Endothelial cell of umbilical vein (primary cell): ENCODE measurements at regions of chr12 and their contacts with region 1.

Region 1: DNA sequence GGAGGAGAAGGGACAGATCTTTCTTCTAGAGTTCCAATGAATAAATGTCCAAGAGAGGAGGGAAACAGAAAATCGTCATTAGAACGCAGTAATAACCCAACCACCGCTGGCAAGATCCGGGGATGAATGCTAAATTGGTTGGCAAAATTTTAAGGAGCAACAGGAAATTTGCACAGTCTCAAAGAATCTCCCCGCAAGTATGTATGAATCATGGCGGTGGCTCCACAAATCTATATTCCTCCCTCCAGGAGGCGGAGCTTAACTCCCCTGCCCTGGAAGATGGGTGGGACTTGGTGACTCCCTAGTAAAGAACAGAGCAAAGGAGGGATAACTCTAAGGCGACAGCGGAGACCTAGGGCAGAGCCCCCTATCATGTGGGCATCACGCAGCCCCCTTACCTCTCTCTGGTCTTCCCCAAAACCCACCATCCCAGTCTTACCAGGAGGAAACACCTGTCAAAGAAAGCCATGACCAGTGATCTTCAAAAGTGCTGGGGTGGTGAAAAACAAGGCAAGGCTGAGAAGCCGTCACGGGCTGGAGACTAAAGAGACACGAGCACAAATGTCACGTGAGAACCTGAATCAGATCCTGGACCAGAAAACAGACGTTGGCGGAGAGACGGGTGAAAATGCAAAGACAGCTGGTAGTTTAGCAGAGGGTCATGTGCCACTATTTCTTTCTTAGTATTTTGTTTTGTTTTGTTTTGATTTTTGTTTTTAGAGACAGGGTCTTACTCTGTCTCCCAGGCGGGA is 125.8 kb downstream of the NCOR2 start:
- DNase-seq: peak; percentile 83
- H3K4me3 ChIP-seq: peak overlapping the region in 1 of 3 experiments; percentile 5
- H3K27ac ChIP-seq: peak overlapping the region; percentile 89
- H3K4me1 ChIP-seq: peaks cover 27% of the 10 kb centered on the region
- H3K27me3 ChIP-seq: no peaks in the 10 kb centered on the region
- CTCF ChIP-seq: no peak
- POLR2A ChIP-seq: peak; percentile 56

Region 2: DNA sequence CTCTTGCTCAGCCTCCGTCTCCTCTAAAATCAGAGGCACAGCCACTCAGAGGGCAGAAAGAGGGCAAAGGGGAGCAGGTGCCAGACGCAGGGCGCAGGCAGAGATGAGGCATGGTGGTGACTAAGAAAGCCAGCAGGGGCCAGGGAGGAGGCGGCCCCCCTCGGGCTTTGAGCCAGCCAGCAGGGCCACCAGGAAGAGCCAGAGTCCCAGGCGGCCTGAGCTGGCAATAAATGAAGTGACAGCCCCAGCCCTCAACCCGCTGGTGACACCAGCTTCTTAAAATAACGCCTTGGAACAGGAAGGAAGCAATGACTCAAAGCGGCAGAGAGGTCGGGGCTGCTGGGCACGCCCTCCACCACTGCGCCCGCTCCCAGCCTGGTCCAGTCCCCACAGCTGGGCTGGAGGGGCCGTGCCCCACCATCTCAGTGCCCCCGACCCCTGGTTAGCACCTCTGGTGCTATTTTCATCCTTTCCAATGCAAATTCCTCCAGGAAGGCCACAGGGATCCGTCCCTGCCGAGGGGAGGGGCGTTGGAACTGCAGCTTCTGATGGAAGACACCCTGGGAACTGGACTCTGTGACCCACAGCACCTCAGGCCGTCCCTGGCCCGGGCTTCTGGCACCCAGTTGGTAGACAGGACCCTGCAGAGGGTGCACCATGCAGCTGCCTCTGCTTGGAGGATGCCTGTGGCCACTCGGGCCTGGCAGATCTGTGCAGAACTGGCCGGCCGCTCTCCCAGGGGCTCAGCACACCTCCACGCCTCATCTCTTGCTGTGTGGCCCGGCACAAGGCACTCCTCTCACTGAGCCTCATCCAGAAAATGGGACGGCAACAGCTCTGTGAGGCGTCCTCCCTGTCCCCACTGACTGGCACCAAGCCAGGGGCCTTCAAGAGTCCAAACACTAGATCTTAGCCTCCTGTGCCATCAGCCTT is 12.1 kb after region 1 on chr12:
- CTCF ChIA-PET with region 1: interaction called, 12 read pairs
- POLR2A ChIA-PET with region 1: interaction called, 4 read pairs
- dilution Hi-C with region 1: no loop called
- intact Hi-C with region 1: loop called (anchors 1 kb)
- DNase-seq: peak; percentile 80
- H3K4me3 ChIP-seq: no peak overlapping the region
- H3K27ac ChIP-seq: peak overlapping the region; percentile 81
- H3K4me1 ChIP-seq: peaks cover 29% of the 10 kb centered on the region
- H3K27me3 ChIP-seq: no peaks in the 10 kb centered on the region
- CTCF ChIP-seq: no peak
- POLR2A ChIP-seq: no peak